SK-N-SH (cell line): ENCODE measurements at regions of chr15 and their contacts with region 1.

Region 1: GRCh38 chr15:66497502-66498455 is at the start of gene SNAPC5:
- DNase-seq: peak; percentile 93
- H3K4me3 ChIP-seq: peak within 1 kb of the TSS; percentile 91 to 97
- H3K27ac ChIP-seq: peak within 1 kb of the TSS; percentile 65 to 66
- H3K4me1 ChIP-seq: peaks cover 0 to 17% of the 10 kb centered on the region in 2 experiments; a peak in 2 of 4 replicates
- H3K27me3 ChIP-seq: no peaks in the 10 kb centered on the region
- CTCF ChIP-seq: peak; percentile 99
- EP300 ChIP-seq: no peak; a peak in 1 of 4 replicates
- RAD21 ChIP-seq: peak; percentile 38
- polyA plus RNA-seq, gene SNAPC5: 57.8 and 65.0 TPM in 2 replicates

Region 2: DNA sequence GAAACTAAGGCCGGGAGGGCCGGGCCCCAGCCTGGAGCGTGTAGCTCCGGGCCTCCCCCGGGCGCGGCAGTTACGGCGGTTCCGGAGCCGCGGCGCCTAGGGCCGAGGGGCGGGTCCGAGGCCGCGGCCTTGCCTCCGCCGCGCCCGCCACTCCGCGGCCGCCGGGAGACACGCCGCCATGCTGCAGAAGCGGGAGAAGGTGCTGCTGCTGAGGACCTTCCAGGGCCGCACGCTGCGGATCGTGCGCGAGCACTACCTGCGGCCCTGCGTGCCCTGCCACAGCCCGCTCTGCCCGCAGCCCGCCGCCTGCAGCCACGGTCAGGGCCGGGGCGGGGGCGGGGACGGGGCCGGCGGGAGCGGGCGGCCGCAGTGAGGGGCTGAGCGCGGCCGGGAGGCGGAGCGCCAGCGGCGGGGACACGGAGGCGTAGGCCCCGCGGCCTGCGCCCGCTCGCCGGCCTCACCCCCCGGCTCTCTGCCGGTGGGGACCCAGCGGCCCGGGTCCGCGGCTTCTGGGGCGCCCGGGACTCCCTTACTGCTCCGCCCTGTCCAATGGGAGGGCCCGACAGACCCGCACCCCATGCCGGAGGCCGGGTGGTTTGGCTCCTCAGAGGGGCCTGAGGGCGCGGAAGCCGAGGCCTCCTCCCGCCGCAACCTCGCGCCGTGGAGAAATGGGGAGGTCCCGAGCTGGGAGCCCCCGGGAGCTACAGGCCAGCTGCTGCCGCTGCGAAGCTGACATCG is 204.2 kb before region 1 on chr15 and contains the start of gene DIS3L:
- CTCF ChIA-PET with region 1: interaction called, 12 read pairs
- POLR2A ChIA-PET with region 1: no interaction called
- DNase-seq: peak; percentile 91
- H3K4me3 ChIP-seq: peak within 1 kb of the TSS; percentile 66 to 80
- H3K27ac ChIP-seq: peak within 1 kb of the TSS; percentile 75 to 88
- H3K4me1 ChIP-seq: peaks cover 24 to 26% of the 10 kb centered on the region in 2 experiments; a peak in 3 of 4 replicates
- H3K27me3 ChIP-seq: no peaks in the 10 kb centered on the region
- CTCF ChIP-seq: no peak
- EP300 ChIP-seq: no peak
- RAD21 ChIP-seq: no peak
- polyA plus RNA-seq, gene DIS3L: 11.5 and 14.9 TPM in 2 replicates

Region 3: GRCh38 chr15:66472176-66472999 is 25.4 kb before region 1 on chr15:
- CTCF ChIA-PET with region 1: interaction called, 11 read pairs
- POLR2A ChIA-PET with region 1: interaction called, 3 read pairs
- DNase-seq: no peak
- H3K4me3 ChIP-seq: no peak overlapping the region
- H3K27ac ChIP-seq: no peak overlapping the region
- H3K4me1 ChIP-seq: peaks cover 0 to 9% of the 10 kb centered on the region in 2 experiments; a peak in 1 of 4 replicates
- H3K27me3 ChIP-seq: no peaks in the 10 kb centered on the region
- CTCF ChIP-seq: no peak
- EP300 ChIP-seq: no peak
- RAD21 ChIP-seq: no peak

Region 4: GRCh38 chr15:66524838-66525237 is 27.1 kb after region 1 on chr15:
- CTCF ChIA-PET with region 1: no interaction called
- POLR2A ChIA-PET with region 1: no interaction called
- DNase-seq: no peak
- H3K4me3 ChIP-seq: no peak overlapping the region
- H3K27ac ChIP-seq: no peak overlapping the region
- H3K4me1 ChIP-seq: no peaks in the 10 kb centered on the region; a peak in 1 of 4 replicates
- H3K27me3 ChIP-seq: no peaks in the 10 kb centered on the region
- CTCF ChIP-seq: no peak
- EP300 ChIP-seq: no peak
- RAD21 ChIP-seq: no peak